Endothelial cell of umbilical vein (primary cell): ENCODE measurements at regions of chr12 and their contacts with region 1.

Region 1: GRCh38 chr12:65169320-65170208 is at the start of gene LEMD3:
- DNase-seq: peak; percentile 88
- H3K4me3 ChIP-seq: peak within 1 kb of the TSS; percentile 77 to 97 (median 97)
- H3K27ac ChIP-seq: peak within 1 kb of the TSS; percentile 98
- H3K4me1 ChIP-seq: peaks cover 33% of the 10 kb centered on the region
- H3K27me3 ChIP-seq: no peaks in the 10 kb centered on the region
- CTCF ChIP-seq: no peak
- POLR2A ChIP-seq: peak; percentile 93
- total RNA-seq, gene LEMD3: 24.2 and 29.0 TPM in 2 replicates

Region 2: GRCh38 chr12:65121049-65121955 is 48.3 kb before region 1 on chr12 and contains the start of gene WIF1:
- CTCF ChIA-PET with region 1: no interaction called
- POLR2A ChIA-PET with region 1: no interaction called
- dilution Hi-C with region 1: no loop called
- intact Hi-C with region 1: loop called (anchors 5 kb)
- DNase-seq: peak; percentile 22
- H3K4me3 ChIP-seq: peak within 1 kb of the TSS; percentile 12 to 21 (median 13)
- H3K27ac ChIP-seq: no peak within 1 kb of the TSS
- H3K4me1 ChIP-seq: peaks cover 2% of the 10 kb centered on the region
- H3K27me3 ChIP-seq: peaks cover 36 to 67% of the 10 kb centered on the region in 2 experiments
- CTCF ChIP-seq: peak; percentile 59 to 69
- POLR2A ChIP-seq: no peak
- total RNA-seq, gene WIF1: not detected in 2 replicates

Region 3: GRCh38 chr12:65209655-65210043 is 40.1 kb after region 1 on chr12:
- CTCF ChIA-PET with region 1: interaction called, 3 read pairs
- POLR2A ChIA-PET with region 1: interaction called, 4 read pairs
- dilution Hi-C with region 1: no loop called
- intact Hi-C with region 1: loop called (anchors 2 kb)
- DNase-seq: peak; percentile 82
- H3K4me3 ChIP-seq: peak overlapping the region in 1 of 3 experiments; percentile 16
- H3K27ac ChIP-seq: peak overlapping the region; percentile 3
- H3K4me1 ChIP-seq: peaks cover 17% of the 10 kb centered on the region
- H3K27me3 ChIP-seq: no peaks in the 10 kb centered on the region
- CTCF ChIP-seq: no peak
- POLR2A ChIP-seq: no peak

Region 4: DNA sequence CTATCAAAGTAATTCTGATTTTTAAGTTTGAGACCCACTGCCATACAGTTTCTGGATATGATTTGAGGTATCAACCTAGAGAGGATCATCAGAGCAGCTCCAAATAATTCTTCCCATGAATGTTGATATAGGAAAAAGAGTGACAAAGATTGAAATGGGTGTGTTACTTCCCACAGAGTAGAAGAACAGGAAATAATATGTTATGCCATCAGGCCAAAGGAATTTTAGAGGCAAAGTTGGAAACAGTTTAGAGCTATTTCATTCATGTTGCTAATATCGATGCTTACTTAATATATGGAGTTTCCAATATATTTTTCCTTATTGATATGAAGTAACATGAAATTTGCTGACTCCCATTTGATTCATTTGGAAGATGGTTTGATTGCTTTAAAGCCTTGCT is 100.0 kb after region 1 on chr12:
- CTCF ChIA-PET with region 1: no interaction called
- POLR2A ChIA-PET with region 1: no interaction called
- dilution Hi-C with region 1: no loop called
- intact Hi-C with region 1: loop called (anchors 2 kb)
- DNase-seq: peak; percentile 76
- H3K4me3 ChIP-seq: peak overlapping the region in 1 of 3 experiments; percentile 6
- H3K27ac ChIP-seq: peak overlapping the region; percentile 80
- H3K4me1 ChIP-seq: peaks cover 26% of the 10 kb centered on the region
- H3K27me3 ChIP-seq: no peaks in the 10 kb centered on the region
- CTCF ChIP-seq: no peak
- POLR2A ChIP-seq: no peak

Region 5: DNA sequence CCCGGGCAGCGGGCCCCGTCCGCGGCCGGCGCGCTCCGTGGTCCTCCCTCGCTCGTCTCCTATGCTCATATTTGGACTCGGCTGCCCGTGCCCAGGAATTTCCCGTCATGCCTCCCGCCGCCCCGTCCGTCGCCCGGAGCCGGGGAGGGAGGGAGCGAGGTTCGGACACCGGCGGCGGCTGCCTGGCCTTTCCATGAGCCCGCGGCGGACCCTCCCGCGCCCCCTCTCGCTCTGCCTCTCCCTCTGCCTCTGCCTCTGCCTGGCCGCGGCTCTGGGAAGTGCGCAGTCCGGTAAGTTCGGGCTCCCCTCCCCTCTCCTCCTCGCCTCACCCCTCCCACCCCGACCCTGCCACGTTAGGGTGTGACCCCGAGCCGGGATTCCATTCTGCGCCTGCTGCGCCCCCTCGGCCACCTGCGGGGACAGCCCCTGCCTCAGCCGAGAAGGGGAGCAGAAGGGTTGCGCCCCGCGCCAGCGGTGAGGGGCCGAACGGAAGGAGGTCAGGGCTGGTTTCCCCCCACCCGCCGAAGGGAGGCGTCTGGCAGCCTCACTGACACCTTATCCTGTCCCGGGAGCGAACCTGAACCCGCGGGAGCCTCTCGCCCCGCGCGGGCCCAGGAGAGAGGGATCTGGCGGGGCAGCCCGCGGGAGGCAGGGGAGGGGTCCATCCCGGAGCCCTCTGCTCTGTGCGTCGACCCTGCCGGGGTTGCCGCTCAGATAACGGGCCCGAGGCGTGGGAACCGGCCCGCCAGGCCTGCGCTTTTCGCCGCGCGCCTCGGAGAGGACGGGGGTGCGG is 109.2 kb after region 1 on chr12 and contains the start of gene MSRB3:
- CTCF ChIA-PET with region 1: interaction called, 4 read pairs
- POLR2A ChIA-PET with region 1: no interaction called
- dilution Hi-C with region 1: no loop called
- intact Hi-C with region 1: loop called (anchors 2 kb)
- DNase-seq: peak; percentile 66
- H3K4me3 ChIP-seq: peak within 1 kb of the TSS; percentile 63 to 95 (median 90)
- H3K27ac ChIP-seq: peak within 1 kb of the TSS; percentile 94
- H3K4me1 ChIP-seq: peaks cover 24% of the 10 kb centered on the region
- H3K27me3 ChIP-seq: no peaks in the 10 kb centered on the region
- CTCF ChIP-seq: no peak
- POLR2A ChIP-seq: no peak
- total RNA-seq, gene MSRB3: 59.3 and 63.7 TPM in 2 replicates